H1 (cell line): ENCODE measurements at regions of chr20 and their contacts with region 1.

Region 1: GRCh38 chr20:47379433-47380150 is 23.1 kb upstream of the ZMYND8 start:
- DNase-seq: no peak
- H3K4me3 ChIP-seq: no peak overlapping the region
- H3K27ac ChIP-seq: no peak overlapping the region
- H3K4me1 ChIP-seq: peaks cover 0 to 11% (median 2%) of the 10 kb centered on the region in 4 experiments; a peak in 5 of 7 replicates
- H3K27me3 ChIP-seq: no peaks in the 10 kb centered on the region
- CTCF ChIP-seq: no peak
- EP300 ChIP-seq: no peak
- POLR2A ChIP-seq: no peak
- RAD21 ChIP-seq: no peak

Region 2: DNA sequence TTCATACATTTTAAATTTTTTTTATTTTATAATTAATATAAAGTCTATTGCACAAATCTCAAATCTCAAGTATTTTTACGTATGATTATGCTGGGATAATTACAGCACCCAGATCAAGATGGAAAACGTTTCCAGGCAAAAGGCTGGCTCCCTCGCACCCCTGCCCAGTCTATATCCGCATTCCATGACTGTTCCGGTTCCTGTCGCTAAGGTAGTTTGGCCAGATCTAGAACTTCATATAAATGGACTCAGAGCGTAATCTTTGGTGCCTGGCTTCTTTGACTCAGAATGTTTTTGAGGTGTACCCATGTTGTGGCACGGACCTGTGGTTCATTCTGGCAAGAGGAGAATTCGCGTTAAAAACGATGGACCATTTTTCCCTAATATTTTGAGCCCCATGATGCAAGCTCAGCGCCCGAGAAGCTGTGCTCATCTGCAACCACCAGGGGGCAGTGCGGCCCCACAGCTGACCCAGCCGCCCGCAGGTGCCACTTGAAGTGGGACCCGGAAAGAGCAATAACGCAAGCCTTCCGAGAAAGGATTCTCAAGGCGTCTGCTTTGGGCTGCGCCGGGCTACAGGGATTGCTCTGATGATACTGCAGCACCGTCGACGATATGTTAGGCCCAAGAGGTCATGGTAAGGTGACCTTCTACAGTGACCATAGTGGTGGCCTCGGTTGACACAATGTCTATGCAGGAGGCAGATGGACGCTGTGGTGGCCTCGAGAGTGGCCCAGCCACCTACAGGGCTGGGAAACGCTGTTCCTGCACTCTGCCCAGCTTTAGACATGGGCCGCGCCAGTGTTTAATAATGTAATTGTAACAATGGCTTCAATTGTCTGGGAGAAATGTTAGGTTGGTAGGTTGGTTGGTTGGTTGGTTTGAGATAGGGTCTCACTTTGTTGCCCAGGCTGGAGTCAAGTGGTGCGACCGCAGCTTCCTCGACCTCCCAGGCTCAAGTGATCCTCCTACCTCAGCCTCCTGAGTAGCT is 183.2 kb before region 1 on chr20:
- CTCF ChIA-PET with region 1: interaction called, 17 read pairs
- POLR2A ChIA-PET with region 1: interaction called, 6 read pairs
- DNase-seq: peak; percentile 59 to 95
- H3K4me3 ChIP-seq: no peak overlapping the region
- H3K27ac ChIP-seq: no peak overlapping the region
- H3K4me1 ChIP-seq: peaks cover 0 to 3% (median under 1%) of the 10 kb centered on the region in 4 experiments; a peak in 3 of 7 replicates
- H3K27me3 ChIP-seq: no peaks in the 10 kb centered on the region
- CTCF ChIP-seq: peak; percentile 91 to 94 (median 94)
- EP300 ChIP-seq: no peak
- POLR2A ChIP-seq: no peak
- RAD21 ChIP-seq: peak; percentile 98

Region 3: GRCh38 chr20:47220161-47220582 is 159.4 kb before region 1 on chr20:
- CTCF ChIA-PET with region 1: interaction called, 15 read pairs
- POLR2A ChIA-PET with region 1: no interaction called
- DNase-seq: peak in 1 of 2 experiments; percentile 84
- H3K4me3 ChIP-seq: no peak overlapping the region
- H3K27ac ChIP-seq: no peak overlapping the region
- H3K4me1 ChIP-seq: no peaks in the 10 kb centered on the region
- H3K27me3 ChIP-seq: no peaks in the 10 kb centered on the region
- CTCF ChIP-seq: peak; percentile 61 to 74 (median 66)
- EP300 ChIP-seq: no peak
- POLR2A ChIP-seq: no peak
- RAD21 ChIP-seq: peak; percentile 26 to 48; a peak in 2 of 4 replicates

Region 4: GRCh38 chr20:47278563-47279348 is 100.8 kb before region 1 on chr20:
- CTCF ChIA-PET with region 1: interaction called, 179 read pairs
- POLR2A ChIA-PET with region 1: interaction called, 6 read pairs
- DNase-seq: no peak
- H3K4me3 ChIP-seq: no peak overlapping the region
- H3K27ac ChIP-seq: peak overlapping the region; percentile 46; the same call in 1 of the 2 replicates
- H3K4me1 ChIP-seq: peaks cover 0 to 3% (median under 1%) of the 10 kb centered on the region in 4 experiments; a peak in 2 of 7 replicates
- H3K27me3 ChIP-seq: no peaks in the 10 kb centered on the region
- CTCF ChIP-seq: no peak
- EP300 ChIP-seq: no peak
- POLR2A ChIP-seq: no peak
- RAD21 ChIP-seq: no peak

Region 5: GRCh38 chr20:47304287-47304686 is 75.3 kb before region 1 on chr20:
- CTCF ChIA-PET with region 1: interaction called, 15 read pairs
- POLR2A ChIA-PET with region 1: interaction called, 1,191 read pairs
- DNase-seq: no peak
- H3K4me3 ChIP-seq: no peak overlapping the region
- H3K27ac ChIP-seq: no peak overlapping the region
- H3K4me1 ChIP-seq: peaks cover 5 to 15% (median 10%) of the 10 kb centered on the region in 4 experiments
- H3K27me3 ChIP-seq: no peaks in the 10 kb centered on the region
- CTCF ChIP-seq: no peak
- EP300 ChIP-seq: no peak
- POLR2A ChIP-seq: no peak
- RAD21 ChIP-seq: no peak

Region 6: DNA sequence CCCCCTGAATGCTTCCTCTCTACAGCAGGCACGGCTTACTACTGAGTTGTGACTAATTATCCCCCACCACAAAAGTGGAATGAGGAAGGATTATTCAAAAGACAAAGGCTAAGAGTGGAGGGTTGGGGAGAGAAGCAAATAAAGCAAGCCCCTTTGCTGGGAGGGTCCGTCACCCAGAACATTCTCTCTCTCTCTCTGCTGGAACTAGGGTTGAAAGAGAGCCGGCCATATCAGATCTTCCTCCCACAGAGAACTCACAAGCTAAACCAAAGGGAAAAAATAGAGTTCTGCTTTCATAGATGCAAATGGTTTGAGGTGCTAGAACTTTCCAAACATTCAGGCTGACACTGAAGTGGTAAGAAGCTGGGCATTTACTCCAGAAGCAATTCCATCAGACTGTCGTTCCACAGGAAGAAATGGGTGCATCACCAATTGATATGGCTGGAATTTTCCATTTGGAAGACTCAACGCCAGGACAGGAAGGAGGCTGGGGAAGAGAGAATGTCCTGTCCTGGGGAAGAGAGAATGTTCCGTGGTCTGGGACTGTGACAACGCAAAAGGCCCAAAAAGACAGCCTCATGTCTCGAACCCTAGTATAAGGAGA is 31.0 kb before region 1 on chr20:
- CTCF ChIA-PET with region 1: interaction called, 19 read pairs
- POLR2A ChIA-PET with region 1: interaction called, 423 read pairs
- DNase-seq: no peak
- H3K4me3 ChIP-seq: peak overlapping the region in 1 of 4 experiments; percentile 25; a peak in 2 of 8 replicates
- H3K27ac ChIP-seq: peak overlapping the region; percentile 70
- H3K4me1 ChIP-seq: peaks cover 44 to 72% (median 49%) of the 10 kb centered on the region in 4 experiments
- H3K27me3 ChIP-seq: no peaks in the 10 kb centered on the region
- CTCF ChIP-seq: no peak
- EP300 ChIP-seq: no peak
- POLR2A ChIP-seq: peak in 1 of 2 experiments; percentile 23; a peak in 1 of 3 replicates
- RAD21 ChIP-seq: no peak

Region 7: GRCh38 chr20:47502271-47503239 is 123.0 kb after region 1 on chr20:
- CTCF ChIA-PET with region 1: no interaction called
- POLR2A ChIA-PET with region 1: no interaction called
- DNase-seq: peak in 1 of 2 experiments; percentile 59
- H3K4me3 ChIP-seq: peak overlapping the region; percentile 74 to 89 (median 84)
- H3K27ac ChIP-seq: peak overlapping the region; percentile 60; the same call in 1 of the 2 replicates
- H3K4me1 ChIP-seq: peaks cover 0 to 9% (median 4%) of the 10 kb centered on the region in 4 experiments; a peak in 4 of 7 replicates
- H3K27me3 ChIP-seq: no peaks in the 10 kb centered on the region
- CTCF ChIP-seq: no peak
- EP300 ChIP-seq: no peak
- POLR2A ChIP-seq: no peak; a peak in 1 of 3 replicates
- RAD21 ChIP-seq: no peak

Region 8: GRCh38 chr20:47725248-47725973 is 345.8 kb after region 1 on chr20:
- CTCF ChIA-PET with region 1: no interaction called
- POLR2A ChIA-PET with region 1: no interaction called
- DNase-seq: peak; percentile 70 to 85
- H3K4me3 ChIP-seq: no peak overlapping the region
- H3K27ac ChIP-seq: no peak overlapping the region
- H3K4me1 ChIP-seq: no peaks in the 10 kb centered on the region; a peak in 1 of 7 replicates
- H3K27me3 ChIP-seq: no peaks in the 10 kb centered on the region
- CTCF ChIP-seq: peak; percentile 79 to 94 (median 84)
- EP300 ChIP-seq: no peak
- POLR2A ChIP-seq: no peak
- RAD21 ChIP-seq: peak; percentile 89 to 93